ENCODE measurements at regions of chr1 and their contacts with region 1.

Region 1: DNA sequence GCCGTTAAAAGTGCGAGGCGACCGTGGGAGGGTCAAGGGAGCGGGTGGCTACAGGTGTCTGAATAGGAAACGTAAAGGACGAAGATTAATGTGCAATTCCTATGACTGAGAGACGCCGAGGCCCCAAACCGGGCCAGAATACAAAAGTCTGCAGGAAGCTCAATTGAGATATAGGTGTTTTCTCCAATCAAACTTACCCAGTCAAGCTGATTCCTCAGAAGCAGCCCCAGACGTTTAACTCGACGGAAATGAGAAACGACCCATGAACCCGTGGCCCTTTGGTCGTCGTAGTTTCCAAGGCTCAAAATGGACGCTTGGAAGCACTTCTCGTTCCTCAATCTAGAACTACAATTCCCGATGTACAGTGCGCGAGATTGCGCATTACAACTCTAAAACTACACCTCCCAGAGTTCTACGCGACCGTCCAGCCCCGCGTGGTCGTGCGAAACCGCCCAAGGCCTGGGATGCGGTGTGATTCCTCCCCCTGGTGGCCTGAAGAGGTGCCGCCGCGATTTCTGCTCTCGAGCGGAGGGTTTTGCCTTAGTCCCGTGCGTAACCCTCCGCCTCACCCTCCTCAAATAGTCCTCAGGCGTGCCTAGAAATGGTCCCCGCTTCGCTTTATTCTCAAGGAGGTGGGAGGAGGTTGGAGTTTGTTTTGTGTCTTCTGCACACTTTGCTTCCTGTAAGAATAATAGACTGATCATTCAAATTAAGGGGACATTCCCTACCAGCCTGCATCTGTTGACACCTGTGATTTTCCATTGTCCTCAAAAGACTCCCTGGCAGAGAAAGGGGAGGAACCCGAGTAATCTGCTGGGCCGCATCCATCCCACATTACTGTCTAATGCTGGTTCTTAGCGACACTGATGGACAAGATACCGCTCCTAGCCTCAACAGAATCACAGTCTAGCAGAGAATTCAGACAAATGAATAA is at the start of gene PAFAH2:
- DNase-seq: peak; percentile 95
- total RNA-seq, gene PAFAH2: 11.8 and 16.6 TPM in 2 replicates

Region 2: DNA sequence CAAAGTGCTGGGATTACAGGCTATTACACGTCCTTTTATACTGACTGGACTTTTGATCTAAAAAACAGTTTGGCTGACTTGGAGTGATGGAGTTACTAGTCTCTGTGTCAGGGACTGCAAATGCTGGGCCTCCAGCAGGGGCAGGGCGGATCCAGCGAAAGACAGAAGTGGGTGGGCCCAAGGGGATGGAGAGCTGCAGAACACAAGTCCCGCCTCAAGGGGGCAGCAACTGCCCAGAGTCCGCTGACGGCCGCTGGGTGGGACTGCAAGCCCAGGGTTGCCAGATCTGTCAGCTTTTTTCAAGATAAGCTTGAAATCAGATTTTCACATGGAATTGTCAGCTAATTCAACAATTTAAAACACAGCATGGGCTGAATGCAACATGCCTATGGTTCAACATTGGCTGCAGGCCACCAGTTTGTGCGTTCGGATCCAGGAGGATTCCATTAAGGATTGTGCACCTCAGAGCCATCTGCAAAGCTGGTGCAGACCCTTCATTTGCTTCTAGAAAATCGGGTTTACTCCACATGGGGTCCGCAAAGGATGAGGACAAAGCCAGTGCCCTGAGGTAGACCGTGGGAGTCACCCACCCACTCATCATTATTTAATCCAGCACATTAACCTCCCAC is 102.6 kb before region 1 on chr1:
- in situ Hi-C with region 1: loop called (anchors 25 kb)
- DNase-seq: peak; percentile 77